ENCODE measurements at regions of chr4 and their contacts with region 1.

Region 1: DNA sequence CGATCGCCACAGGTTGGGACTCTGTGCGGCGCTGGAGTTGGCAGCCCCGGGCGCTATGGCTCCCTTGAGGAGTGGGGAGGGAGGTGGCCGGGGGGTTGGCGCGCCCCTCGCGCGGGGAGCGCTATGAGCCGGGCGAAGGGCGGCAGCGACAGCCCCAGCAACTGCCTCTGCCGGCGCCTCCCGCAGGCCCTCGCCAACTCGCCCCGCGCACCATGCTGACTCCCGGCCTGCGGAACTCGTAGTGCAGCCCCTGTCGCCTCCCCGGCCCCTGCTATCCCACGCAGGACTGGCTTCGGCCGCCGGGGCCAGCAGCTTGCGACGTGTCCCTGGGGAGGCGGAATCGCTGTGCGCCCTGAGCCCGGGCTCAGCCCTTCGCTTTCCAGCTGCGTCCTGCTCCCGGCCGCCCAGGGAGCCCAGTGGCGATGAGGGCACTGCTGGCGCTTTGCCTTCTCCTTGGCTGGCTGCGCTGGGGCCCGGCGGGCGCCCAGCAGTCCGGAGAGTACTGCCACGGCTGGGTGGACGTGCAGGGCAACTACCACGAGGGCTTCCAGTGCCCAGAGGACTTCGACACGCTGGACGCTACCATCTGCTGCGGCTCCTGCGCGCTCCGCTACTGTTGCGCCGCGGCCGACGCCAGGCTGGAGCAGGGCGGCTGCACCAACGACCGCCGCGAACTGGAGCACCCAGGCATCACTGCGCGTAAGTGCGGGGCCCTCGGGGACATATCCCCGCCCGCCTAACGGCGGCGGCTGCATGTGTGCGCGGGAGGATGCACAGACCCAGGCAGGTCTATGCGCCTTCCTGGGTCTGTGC is 553 bp downstream of the SHISA3 start:
- DNase-seq: no peak
- H3K4me3 ChIP-seq: peak overlapping the region; percentile 31
- H3K4me3 Mint-ChIP-seq: peak overlapping the region; percentile 75
- H3K27ac Mint-ChIP-seq: no peak overlapping the region
- H3K4me1 ChIP-seq: no peaks in the 10 kb centered on the region
- H3K4me1 Mint-ChIP-seq: no peaks in the 10 kb centered on the region
- H3K27me3 ChIP-seq: peaks cover 3% of the 10 kb centered on the region; the same call in 1 of the 2 replicates
- H3K27me3 Mint-ChIP-seq: peaks cover 36% of the 10 kb centered on the region
- CTCF ChIP-seq: no peak

Region 2: GRCh38 chr4:42282081-42282901 is 115.5 kb before region 1 on chr4:
- CTCF ChIA-PET with region 1: no interaction called
- POLR2A ChIA-PET with region 1: no interaction called
- intact Hi-C with region 1: loop called (anchors 2 kb)
- DNase-seq: peak in 1 of 2 experiments; percentile 66
- H3K4me3 ChIP-seq: no peak overlapping the region
- H3K4me3 Mint-ChIP-seq: no peak overlapping the region
- H3K27ac Mint-ChIP-seq: no peak overlapping the region
- H3K4me1 ChIP-seq: no peaks in the 10 kb centered on the region
- H3K4me1 Mint-ChIP-seq: no peaks in the 10 kb centered on the region
- H3K27me3 ChIP-seq: no peaks in the 10 kb centered on the region
- H3K27me3 Mint-ChIP-seq: peaks cover 3% of the 10 kb centered on the region
- CTCF ChIP-seq: peak; percentile 53 to 80

Region 3: GRCh38 chr4:42381666-42382065 is 16.2 kb before region 1 on chr4:
- CTCF ChIA-PET with region 1: no interaction called
- POLR2A ChIA-PET with region 1: no interaction called
- intact Hi-C with region 1: no loop called
- DNase-seq: no peak
- H3K4me3 ChIP-seq: no peak overlapping the region
- H3K4me3 Mint-ChIP-seq: no peak overlapping the region
- H3K27ac Mint-ChIP-seq: no peak overlapping the region
- H3K4me1 ChIP-seq: no peaks in the 10 kb centered on the region
- H3K4me1 Mint-ChIP-seq: no peaks in the 10 kb centered on the region
- H3K27me3 ChIP-seq: no peaks in the 10 kb centered on the region
- H3K27me3 Mint-ChIP-seq: peaks cover 23% of the 10 kb centered on the region
- CTCF ChIP-seq: no peak

Region 4: GRCh38 chr4:42460043-42460442 is 62.2 kb after region 1 on chr4:
- CTCF ChIA-PET with region 1: no interaction called
- POLR2A ChIA-PET with region 1: no interaction called
- intact Hi-C with region 1: loop called (anchors 5 kb)
- DNase-seq: peak; percentile 46 to 58
- H3K4me3 ChIP-seq: no peak overlapping the region
- H3K4me3 Mint-ChIP-seq: no peak overlapping the region
- H3K27ac Mint-ChIP-seq: no peak overlapping the region
- H3K4me1 ChIP-seq: peaks cover 4% of the 10 kb centered on the region; the same call in 1 of the 2 replicates
- H3K4me1 Mint-ChIP-seq: no peaks in the 10 kb centered on the region
- H3K27me3 ChIP-seq: no peaks in the 10 kb centered on the region
- H3K27me3 Mint-ChIP-seq: no peaks in the 10 kb centered on the region
- CTCF ChIP-seq: no peak

Region 5: GRCh38 chr4:42501624-42502401 is 104.0 kb after region 1 on chr4:
- CTCF ChIA-PET with region 1: no interaction called
- POLR2A ChIA-PET with region 1: no interaction called
- intact Hi-C with region 1: loop called (anchors 5 kb)
- DNase-seq: no peak
- H3K4me3 ChIP-seq: no peak overlapping the region
- H3K4me3 Mint-ChIP-seq: no peak overlapping the region
- H3K27ac Mint-ChIP-seq: no peak overlapping the region
- H3K4me1 ChIP-seq: no peaks in the 10 kb centered on the region
- H3K4me1 Mint-ChIP-seq: no peaks in the 10 kb centered on the region
- H3K27me3 ChIP-seq: no peaks in the 10 kb centered on the region
- H3K27me3 Mint-ChIP-seq: no peaks in the 10 kb centered on the region
- CTCF ChIP-seq: no peak

Region 6: DNA sequence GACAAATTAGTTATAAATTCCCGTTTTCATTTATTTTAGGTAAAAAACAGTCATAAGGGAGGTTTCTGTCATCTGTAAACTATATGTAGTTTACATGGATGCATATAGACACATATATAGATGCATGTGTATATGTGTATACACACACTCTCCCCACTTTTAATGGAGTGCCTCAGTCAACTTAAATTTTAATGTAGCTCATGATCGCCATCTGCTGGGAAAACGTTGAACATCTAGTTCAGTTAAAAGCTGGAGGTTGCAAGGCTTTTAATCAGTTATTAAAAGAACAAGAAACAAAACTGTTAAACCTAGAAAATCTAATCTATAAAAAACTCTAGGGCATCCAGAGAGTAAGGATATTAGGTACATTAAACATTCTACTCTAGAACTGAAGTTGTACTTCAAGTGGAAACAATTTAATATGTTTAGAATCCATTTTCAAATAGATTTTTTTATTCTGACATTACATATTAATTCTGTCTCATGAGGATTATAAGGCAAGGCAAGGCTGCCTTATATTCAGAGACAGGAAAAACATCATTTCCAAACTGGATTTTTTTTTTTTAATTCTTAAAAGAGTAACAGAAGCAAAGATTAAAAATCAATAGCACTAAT is 122.1 kb after region 1 on chr4:
- CTCF ChIA-PET with region 1: interaction called, 18 read pairs
- POLR2A ChIA-PET with region 1: no interaction called
- intact Hi-C with region 1: loop called (anchors 1 kb)
- DNase-seq: peak in 1 of 2 experiments; percentile 62
- H3K4me3 ChIP-seq: no peak overlapping the region
- H3K4me3 Mint-ChIP-seq: no peak overlapping the region
- H3K27ac Mint-ChIP-seq: no peak overlapping the region
- H3K4me1 ChIP-seq: no peaks in the 10 kb centered on the region
- H3K4me1 Mint-ChIP-seq: no peaks in the 10 kb centered on the region
- H3K27me3 ChIP-seq: no peaks in the 10 kb centered on the region
- H3K27me3 Mint-ChIP-seq: no peaks in the 10 kb centered on the region
- CTCF ChIP-seq: peak; percentile 35 to 40

Measured in Caco-2 (cell line).